HepG2 (cell line): ENCODE measurements at regions of chr2 and their contacts with region 1.

Region 1: DNA sequence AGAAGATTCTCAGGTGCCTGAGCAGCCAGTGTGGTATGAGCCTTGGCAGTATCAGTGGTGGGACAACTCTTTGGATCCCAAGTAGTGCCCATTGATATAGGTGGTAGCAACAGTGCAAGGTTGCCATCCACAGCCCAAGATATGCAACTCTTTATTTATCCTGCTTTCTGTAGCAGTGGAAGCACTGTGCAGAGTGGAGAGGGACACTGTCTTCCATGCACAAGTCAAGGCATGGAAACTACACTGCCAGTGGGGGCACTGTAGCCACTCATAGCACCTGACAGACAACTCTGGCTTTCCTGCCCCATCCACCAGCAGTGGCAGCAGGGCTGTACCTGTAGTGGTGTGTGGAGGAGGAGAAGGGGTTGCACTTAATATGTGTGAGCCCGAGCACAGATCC is 409.6 kb upstream of the TMEFF2 start:
- DNase-seq: peak; percentile 3
- ATAC-seq: peak; percentile 98
- H3K4me3 ChIP-seq: no peak overlapping the region
- H3K27ac ChIP-seq: no peak overlapping the region
- H3K4me1 ChIP-seq: no peaks in the 10 kb centered on the region
- H3K27me3 ChIP-seq: no peaks in the 10 kb centered on the region
- CTCF ChIP-seq: peak; percentile 21; the same call in 1 of the 2 replicates
- EP300 ChIP-seq: no peak
- POLR2A ChIP-seq: no peak
- RAD21 ChIP-seq: no peak

Region 2: GRCh38 chr2:192634557-192634956 is 30.3 kb after region 1 on chr2:
- CTCF ChIA-PET with region 1: no interaction called
- POLR2A ChIA-PET with region 1: no interaction called
- in situ Hi-C with region 1: no loop called
- intact Hi-C with region 1: loop called (anchors 2 kb)
- DNase-seq: no peak
- ATAC-seq: no peak
- H3K4me3 ChIP-seq: no peak overlapping the region
- H3K27ac ChIP-seq: no peak overlapping the region
- H3K4me1 ChIP-seq: no peaks in the 10 kb centered on the region
- H3K27me3 ChIP-seq: no peaks in the 10 kb centered on the region
- CTCF ChIP-seq: no peak
- EP300 ChIP-seq: no peak
- POLR2A ChIP-seq: no peak
- RAD21 ChIP-seq: no peak